Calu3 (cell line): ENCODE measurements at regions of chr2 and their contacts with region 1.

Region 1: GRCh38 chr2:137975280-137976265 is 11.3 kb downstream of the HNMT start:
- DNase-seq: peak; percentile 59
- H3K4me3 Mint-ChIP-seq: peak overlapping the region; percentile 41
- H3K27ac Mint-ChIP-seq: peak overlapping the region; percentile 87
- H3K4me1 Mint-ChIP-seq: peaks cover 49% of the 10 kb centered on the region
- H3K27me3 Mint-ChIP-seq: no peaks in the 10 kb centered on the region
- CTCF ChIP-seq: no peak

Region 2: GRCh38 chr2:137693534-137693933 is 282.0 kb before region 1 on chr2:
- CTCF ChIA-PET with region 1: no interaction called
- intact Hi-C with region 1: loop called (anchors 10 kb)
- DNase-seq: peak; percentile 30
- H3K4me3 Mint-ChIP-seq: peak overlapping the region; percentile 42
- H3K27ac Mint-ChIP-seq: peak overlapping the region; percentile 83
- H3K4me1 Mint-ChIP-seq: peaks cover 41% of the 10 kb centered on the region
- H3K27me3 Mint-ChIP-seq: no peaks in the 10 kb centered on the region
- CTCF ChIP-seq: no peak